ENCODE measurements at regions of chr1 and their contacts with region 1.

Region 1: GRCh38 chr1:175154629-175155472 is 37.7 kb downstream of the KIAA0040 start:
- DNase-seq: peak; percentile 67 to 80
- ATAC-seq: peak; percentile 58 to 82 (median 72)
- H3K4me3 ChIP-seq: no peak overlapping the region
- H3K27ac ChIP-seq: no peak overlapping the region
- H3K4me1 ChIP-seq: peaks cover 4% of the 10 kb centered on the region
- H3K27me3 ChIP-seq: peaks cover 0 to 4% (median 0%) of the 10 kb centered on the region in 3 donors
- CTCF ChIP-seq: peak; percentile 94

Region 2: DNA sequence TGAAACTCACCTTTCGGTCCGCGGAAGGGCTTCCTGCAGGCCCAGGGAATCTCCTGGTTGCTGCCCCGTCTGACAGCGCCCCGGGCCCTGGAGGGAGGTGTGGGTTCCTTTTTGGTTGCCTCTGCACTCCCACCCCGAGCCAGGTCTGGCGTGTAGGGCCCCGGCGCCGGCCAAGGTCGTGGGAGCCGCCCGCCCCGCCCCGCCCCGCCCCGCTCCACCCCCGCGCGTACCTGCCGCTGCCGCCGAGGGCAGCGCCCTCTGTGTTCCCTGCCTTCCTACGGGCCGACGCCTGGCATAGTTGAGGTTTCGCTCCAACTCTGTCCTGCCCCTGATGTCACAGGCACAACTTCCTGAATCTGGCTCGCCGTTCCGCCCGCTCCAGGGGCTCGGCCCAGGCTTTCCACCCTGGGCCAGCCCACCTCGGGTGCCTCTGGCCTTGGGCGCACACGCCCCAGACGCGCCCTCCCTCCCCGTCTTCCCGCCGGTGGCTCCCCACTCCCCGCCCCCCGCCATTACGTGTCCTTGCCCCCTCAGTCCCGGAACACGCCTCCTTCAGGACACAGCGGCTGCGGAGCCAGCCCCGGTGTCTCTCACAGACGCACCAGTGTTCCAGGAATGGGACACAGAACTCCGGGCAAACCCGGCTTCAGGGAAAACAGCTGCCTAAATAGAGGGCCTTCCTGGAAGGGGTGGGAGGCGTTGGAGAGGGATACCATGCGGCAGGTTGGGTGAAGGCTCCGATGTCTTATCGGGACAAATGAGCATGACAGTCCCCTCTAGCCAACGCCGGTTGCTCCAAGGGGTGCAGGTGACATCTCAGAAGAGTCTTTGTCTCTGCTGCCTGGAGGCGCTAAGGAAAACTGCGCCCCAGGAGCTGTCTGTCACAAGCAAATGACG is 38.0 kb after region 1 on chr1 and contains the start of gene KIAA0040:
- intact Hi-C with region 1: loop called in 1 of 2 experiments (anchors 5 kb)
- DNase-seq: peak; percentile 81 to 88
- ATAC-seq: peak; percentile 83 to 84 (median 84)
- H3K4me3 ChIP-seq: peak within 1 kb of the TSS; percentile 86
- H3K27ac ChIP-seq: peak within 1 kb of the TSS; percentile 72
- H3K4me1 ChIP-seq: peaks cover 28% of the 10 kb centered on the region
- H3K27me3 ChIP-seq: no peaks in the 10 kb centered on the region
- CTCF ChIP-seq: no peak
- total RNA-seq, gene KIAA0040: 6.2 to 18.4 (median 14.6) TPM

Region 3: GRCh38 chr1:175221666-175222175 is 66.9 kb after region 1 on chr1:
- intact Hi-C with region 1: loop called in 1 of 2 experiments (anchors 10 kb)
- DNase-seq: no peak
- ATAC-seq: no peak
- H3K4me3 ChIP-seq: no peak overlapping the region
- H3K27ac ChIP-seq: no peak overlapping the region
- H3K4me1 ChIP-seq: peaks cover 8% of the 10 kb centered on the region
- H3K27me3 ChIP-seq: no peaks in the 10 kb centered on the region
- CTCF ChIP-seq: peak; percentile 8

Region 4: GRCh38 chr1:175319418-175320230 is 164.8 kb after region 1 on chr1:
- intact Hi-C with region 1: loop called (anchors 1 to 2 kb)
- DNase-seq: peak; percentile 75 to 87
- ATAC-seq: peak; percentile 92 to 95 (median 92)
- H3K4me3 ChIP-seq: no peak overlapping the region
- H3K27ac ChIP-seq: no peak overlapping the region
- H3K4me1 ChIP-seq: peaks cover 4% of the 10 kb centered on the region
- H3K27me3 ChIP-seq: no peaks in the 10 kb centered on the region
- CTCF ChIP-seq: peak; percentile 95

Region 5: GRCh38 chr1:175887981-175888433 is 733.2 kb after region 1 on chr1:
- intact Hi-C with region 1: loop called in 1 of 2 experiments (anchors 10 kb)
- DNase-seq: peak; percentile 36 to 68
- ATAC-seq: peak; percentile 47 to 76 (median 70)
- H3K4me3 ChIP-seq: no peak overlapping the region
- H3K27ac ChIP-seq: no peak overlapping the region
- H3K4me1 ChIP-seq: no peaks in the 10 kb centered on the region
- H3K27me3 ChIP-seq: no peaks in the 10 kb centered on the region
- CTCF ChIP-seq: peak; percentile 61

Region 6: DNA sequence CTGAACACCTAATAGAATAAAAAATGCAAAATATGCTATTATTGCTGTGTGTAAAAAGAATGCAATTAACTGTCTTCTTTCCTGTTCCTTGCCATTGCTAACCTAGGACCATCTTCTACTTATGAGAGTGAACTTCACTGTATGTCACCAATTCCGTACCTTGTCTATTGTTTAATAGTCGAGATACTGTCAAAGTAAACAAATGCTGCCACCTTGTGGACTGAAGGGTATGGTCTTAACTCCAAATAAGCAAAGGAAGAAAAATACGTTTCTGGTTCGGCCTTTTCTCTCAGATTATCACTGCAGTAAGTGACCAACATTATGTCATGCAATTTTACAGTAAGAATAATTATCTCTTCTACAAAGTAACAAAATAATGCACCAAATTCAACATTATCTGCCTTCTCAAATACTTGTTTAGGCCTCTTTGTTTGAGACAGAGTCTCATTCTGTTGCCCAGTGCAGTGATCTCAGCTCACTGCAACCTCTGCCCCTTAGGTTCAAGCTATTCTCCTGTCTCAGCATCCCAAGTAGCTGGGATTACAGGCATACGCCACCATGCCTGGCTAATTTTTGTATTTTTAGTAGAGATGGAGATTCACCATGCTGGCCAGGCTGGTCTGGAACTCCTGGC is 918.8 kb after region 1 on chr1:
- intact Hi-C with region 1: loop called in 1 of 2 experiments (anchors 5 kb)
- DNase-seq: no peak
- ATAC-seq: peak; percentile 32 to 67 (median 51)
- H3K4me3 ChIP-seq: no peak overlapping the region
- H3K27ac ChIP-seq: no peak overlapping the region
- H3K4me1 ChIP-seq: no peaks in the 10 kb centered on the region
- H3K27me3 ChIP-seq: no peaks in the 10 kb centered on the region
- CTCF ChIP-seq: peak; percentile 67